PC-3 (cell line): ENCODE measurements at regions of chr3 and their contacts with region 1.

Region 1: DNA sequence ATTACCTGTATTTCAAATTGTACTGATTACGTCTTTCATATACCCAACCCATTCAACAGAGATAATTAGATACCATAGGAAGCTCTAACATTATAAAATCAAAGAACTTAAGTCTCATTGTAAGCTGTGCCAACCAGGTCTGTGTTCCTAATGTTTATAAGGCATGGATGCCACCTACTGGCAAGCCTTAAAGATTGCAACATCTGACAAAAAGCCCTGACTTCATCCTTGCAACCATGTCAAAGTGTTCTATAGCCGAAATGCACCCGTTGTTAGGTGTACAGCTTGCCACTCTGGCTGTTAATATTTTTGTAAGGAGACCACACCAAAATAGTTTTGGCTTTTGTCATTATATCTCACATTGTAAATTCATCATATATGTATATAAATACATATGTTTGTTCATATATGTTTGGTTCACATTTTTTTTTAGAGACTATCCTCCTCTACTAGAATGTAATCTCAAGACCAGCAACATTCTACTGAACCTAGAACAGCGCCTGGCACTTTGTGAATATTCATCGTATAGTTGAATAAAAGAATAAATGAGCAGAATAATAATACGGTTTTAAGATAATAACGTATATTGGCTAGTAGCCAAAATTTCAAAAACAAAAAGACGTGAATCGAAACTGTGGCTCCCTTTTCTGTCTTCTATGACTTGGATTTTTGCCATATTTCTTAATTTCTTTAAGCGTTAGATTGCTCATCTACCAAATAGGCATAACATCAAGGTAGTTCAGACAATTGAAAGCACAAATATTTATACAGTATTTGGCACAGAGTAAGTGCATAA is 258.1 kb downstream of the TBL1XR1 start:
- DNase-seq: peak; percentile 86
- ATAC-seq: peak; percentile 96
- H3K4me3 ChIP-seq: peak overlapping the region; percentile 40; the same call in 1 of the 2 replicates
- H3K27ac ChIP-seq: no peak overlapping the region
- H3K4me1 ChIP-seq: peaks cover 4% of the 10 kb centered on the region; the same call in 1 of the 2 replicates
- H3K27me3 ChIP-seq: no peaks in the 10 kb centered on the region
- CTCF ChIP-seq: peak; percentile 94

Region 2: GRCh38 chr3:176514297-176514696 is 424.9 kb before region 1 on chr3:
- CTCF ChIA-PET with region 1: no interaction called
- POLR2A ChIA-PET with region 1: no interaction called
- intact Hi-C with region 1: loop called (anchors 1 kb)
- DNase-seq: peak; percentile 80
- ATAC-seq: peak; percentile 64
- H3K4me3 ChIP-seq: no peak overlapping the region
- H3K27ac ChIP-seq: no peak overlapping the region
- H3K4me1 ChIP-seq: no peaks in the 10 kb centered on the region
- H3K27me3 ChIP-seq: no peaks in the 10 kb centered on the region
- CTCF ChIP-seq: peak; percentile 87

Region 3: DNA sequence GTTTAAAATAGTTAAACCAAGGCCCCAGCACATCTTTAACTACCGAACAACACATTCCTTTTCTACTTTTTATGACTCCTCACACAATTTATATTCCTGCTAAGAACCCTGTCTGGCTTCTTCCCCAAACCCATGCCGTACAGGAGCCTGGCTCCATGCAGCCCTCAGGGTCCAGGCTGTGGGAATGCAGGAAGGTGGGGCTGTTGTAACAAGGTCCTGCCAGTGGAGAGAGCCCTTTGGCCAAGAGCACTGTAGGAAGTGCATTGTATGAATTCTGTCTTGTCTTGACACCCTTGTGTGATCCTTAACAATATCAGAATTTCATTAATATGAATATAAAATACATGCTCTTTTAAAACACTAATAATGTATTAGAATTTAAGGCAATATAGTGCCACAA is 305.7 kb before region 1 on chr3:
- CTCF ChIA-PET with region 1: interaction called, 10 read pairs
- POLR2A ChIA-PET with region 1: no interaction called
- intact Hi-C with region 1: no loop called
- DNase-seq: peak; percentile 11
- ATAC-seq: no peak
- H3K4me3 ChIP-seq: no peak overlapping the region
- H3K27ac ChIP-seq: no peak overlapping the region
- H3K4me1 ChIP-seq: no peaks in the 10 kb centered on the region
- H3K27me3 ChIP-seq: no peaks in the 10 kb centered on the region
- CTCF ChIP-seq: peak; percentile 27; the same call in 1 of the 2 replicates

Region 4: DNA sequence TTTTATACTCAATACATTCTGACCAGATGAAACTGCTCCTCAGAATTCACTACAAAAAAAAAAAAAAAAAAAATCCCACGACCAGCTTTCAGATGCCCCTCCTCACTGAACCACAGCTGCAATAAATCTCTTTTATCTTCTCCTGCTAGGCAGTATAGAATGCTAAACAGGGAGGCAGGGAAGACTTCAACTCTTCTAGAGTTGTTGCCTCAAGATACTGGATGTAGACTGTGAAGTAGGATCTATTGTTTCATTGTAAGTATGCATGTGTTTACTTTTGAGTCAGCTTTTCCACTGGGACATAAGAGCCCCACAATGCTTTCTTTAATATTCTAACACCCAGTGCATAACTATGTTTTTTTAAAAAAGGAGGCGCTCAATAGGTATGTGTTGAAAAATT is 143.3 kb before region 1 on chr3:
- CTCF ChIA-PET with region 1: no interaction called
- POLR2A ChIA-PET with region 1: no interaction called
- intact Hi-C with region 1: no loop called
- DNase-seq: no peak
- ATAC-seq: no peak
- H3K4me3 ChIP-seq: no peak overlapping the region
- H3K27ac ChIP-seq: no peak overlapping the region
- H3K4me1 ChIP-seq: no peaks in the 10 kb centered on the region
- H3K27me3 ChIP-seq: no peaks in the 10 kb centered on the region
- CTCF ChIP-seq: no peak

Region 5: GRCh38 chr3:176872771-176873209 is 66.4 kb before region 1 on chr3:
- CTCF ChIA-PET with region 1: interaction called, 9 read pairs
- POLR2A ChIA-PET with region 1: no interaction called
- intact Hi-C with region 1: loop called (anchors 1 kb)
- DNase-seq: peak; percentile 76
- ATAC-seq: peak; percentile 78
- H3K4me3 ChIP-seq: no peak overlapping the region
- H3K27ac ChIP-seq: no peak overlapping the region
- H3K4me1 ChIP-seq: no peaks in the 10 kb centered on the region
- H3K27me3 ChIP-seq: no peaks in the 10 kb centered on the region
- CTCF ChIP-seq: peak; percentile 89

Region 6: GRCh38 chr3:176961916-176962315 is 22.7 kb after region 1 on chr3:
- CTCF ChIA-PET with region 1: no interaction called
- POLR2A ChIA-PET with region 1: no interaction called
- intact Hi-C with region 1: no loop called
- DNase-seq: peak; percentile 6
- ATAC-seq: no peak
- H3K4me3 ChIP-seq: no peak overlapping the region
- H3K27ac ChIP-seq: no peak overlapping the region
- H3K4me1 ChIP-seq: no peaks in the 10 kb centered on the region
- H3K27me3 ChIP-seq: no peaks in the 10 kb centered on the region
- CTCF ChIP-seq: no peak

Region 7: DNA sequence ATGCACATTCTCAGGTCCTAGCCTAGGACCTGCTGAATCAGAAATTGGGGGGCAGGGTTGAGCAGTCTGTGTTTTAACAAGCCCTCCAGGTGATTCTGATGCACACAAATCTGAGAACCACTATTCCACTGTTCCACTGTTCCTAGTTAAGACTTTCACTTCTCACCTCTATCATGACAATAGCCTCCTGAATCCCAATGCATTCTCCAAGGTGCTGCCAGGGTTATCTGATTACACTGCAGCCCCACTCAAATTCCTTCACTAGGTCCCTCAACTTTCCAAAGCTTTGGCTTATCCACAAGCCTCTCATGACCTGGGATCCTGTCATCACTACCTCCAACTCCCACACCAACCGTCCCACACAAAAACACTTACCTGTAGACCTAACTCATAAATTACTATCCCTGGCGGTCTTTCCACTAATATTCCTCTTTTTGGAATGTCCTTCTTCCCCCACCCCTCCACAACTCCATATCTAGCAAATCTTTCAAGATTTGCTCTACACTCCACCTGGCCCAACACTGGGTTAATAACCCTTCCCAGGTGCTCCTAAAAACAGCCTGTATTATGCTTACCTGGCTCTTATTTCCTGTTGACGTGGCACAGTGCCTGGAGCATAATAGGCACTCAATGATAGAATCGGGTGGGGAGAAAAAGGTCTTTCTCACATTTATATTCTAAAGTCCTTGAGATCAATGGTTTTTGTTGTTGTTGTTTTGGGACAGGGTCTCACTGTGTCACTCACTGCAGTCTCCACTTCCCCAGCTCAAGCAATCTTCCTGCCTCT is 230.9 kb after region 1 on chr3:
- CTCF ChIA-PET with region 1: no interaction called
- POLR2A ChIA-PET with region 1: no interaction called
- intact Hi-C with region 1: no loop called
- DNase-seq: no peak
- ATAC-seq: no peak
- H3K4me3 ChIP-seq: no peak overlapping the region
- H3K27ac ChIP-seq: no peak overlapping the region
- H3K4me1 ChIP-seq: no peaks in the 10 kb centered on the region
- H3K27me3 ChIP-seq: no peaks in the 10 kb centered on the region
- CTCF ChIP-seq: no peak